ENCODE measurements at regions of chr12 and their contacts with region 1.

Region 1: DNA sequence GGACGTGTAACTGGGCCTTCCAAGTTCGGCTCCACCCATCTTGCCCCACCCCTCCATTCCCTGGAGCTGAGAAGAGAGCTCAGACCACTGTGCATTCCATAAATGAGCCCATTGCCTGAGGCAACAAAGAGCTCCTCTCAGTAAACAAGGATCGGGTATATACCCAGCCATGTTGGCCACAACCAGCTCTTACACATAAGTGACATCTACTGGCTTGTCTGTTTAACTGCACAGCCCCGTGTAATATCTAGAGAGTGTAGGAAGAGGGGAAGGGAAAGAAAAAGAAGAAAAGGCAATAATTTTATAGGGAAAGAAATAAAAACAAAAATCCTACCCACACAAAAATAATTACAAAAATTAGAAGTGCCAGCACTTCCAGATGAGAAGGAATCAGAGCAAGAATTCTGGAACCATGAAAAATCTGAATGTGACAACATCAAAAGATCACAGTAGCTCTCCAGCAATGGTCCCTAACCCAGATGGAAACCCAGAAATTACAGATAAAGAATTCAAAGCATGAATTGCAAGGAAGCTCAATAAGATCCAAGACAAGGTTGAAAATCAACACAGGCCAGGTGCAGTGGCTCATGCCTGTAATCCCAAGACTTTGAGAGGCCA is 308.1 kb downstream of the RPAP3 start:
- DNase-seq: peak; percentile 73
- ATAC-seq: peak; percentile 78
- H3K4me3 ChIP-seq: peak overlapping the region in 3 of 5 experiments; percentile 15 to 39 (median 30)
- H3K4me3 Mint-ChIP-seq: peak overlapping the region; percentile 63
- H3K27ac ChIP-seq: peak overlapping the region; percentile 49 to 75
- H3K27ac Mint-ChIP-seq: peak overlapping the region; percentile 91
- H3K4me1 ChIP-seq: peaks cover 27 to 48% of the 10 kb centered on the region in 2 donors
- H3K4me1 Mint-ChIP-seq: peaks cover 72% of the 10 kb centered on the region
- H3K27me3 ChIP-seq: no peaks in the 10 kb centered on the region
- H3K27me3 Mint-ChIP-seq: no peaks in the 10 kb centered on the region
- CTCF ChIP-seq: peak; percentile 70

Region 2: DNA sequence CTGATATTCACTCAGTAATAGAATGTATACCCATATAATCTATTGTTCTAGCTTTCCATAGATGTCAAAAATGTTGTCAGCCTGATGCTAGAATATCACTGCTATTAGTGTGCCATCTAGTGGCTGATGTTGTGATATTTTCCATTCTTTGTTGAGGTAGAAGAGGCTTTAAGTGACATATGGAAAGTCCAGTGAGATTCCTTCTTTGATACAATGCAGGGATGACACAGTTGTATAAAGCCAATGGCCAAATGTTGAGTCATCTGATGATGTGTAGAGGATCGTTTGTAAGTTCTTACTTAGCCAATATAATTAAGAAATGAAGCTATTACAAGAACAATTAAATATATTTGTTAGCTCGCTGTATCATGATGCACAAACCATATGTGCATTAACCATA is 376.5 kb before region 1 on chr12:
- CTCF ChIA-PET with region 1: interaction called, 11 read pairs
- POLR2A ChIA-PET with region 1: no interaction called
- intact Hi-C with region 1: no loop called
- DNase-seq: peak; percentile 70
- ATAC-seq: peak; percentile 28
- H3K4me3 ChIP-seq: no peak overlapping the region
- H3K4me3 Mint-ChIP-seq: no peak overlapping the region
- H3K27ac ChIP-seq: no peak overlapping the region
- H3K27ac Mint-ChIP-seq: no peak overlapping the region
- H3K4me1 ChIP-seq: no peaks in the 10 kb centered on the region
- H3K4me1 Mint-ChIP-seq: no peaks in the 10 kb centered on the region
- H3K27me3 ChIP-seq: peaks cover 0 to 3% (median under 1%) of the 10 kb centered on the region in 4 experiments
- H3K27me3 Mint-ChIP-seq: peaks cover 9% of the 10 kb centered on the region
- CTCF ChIP-seq: peak; percentile 88

Region 3: DNA sequence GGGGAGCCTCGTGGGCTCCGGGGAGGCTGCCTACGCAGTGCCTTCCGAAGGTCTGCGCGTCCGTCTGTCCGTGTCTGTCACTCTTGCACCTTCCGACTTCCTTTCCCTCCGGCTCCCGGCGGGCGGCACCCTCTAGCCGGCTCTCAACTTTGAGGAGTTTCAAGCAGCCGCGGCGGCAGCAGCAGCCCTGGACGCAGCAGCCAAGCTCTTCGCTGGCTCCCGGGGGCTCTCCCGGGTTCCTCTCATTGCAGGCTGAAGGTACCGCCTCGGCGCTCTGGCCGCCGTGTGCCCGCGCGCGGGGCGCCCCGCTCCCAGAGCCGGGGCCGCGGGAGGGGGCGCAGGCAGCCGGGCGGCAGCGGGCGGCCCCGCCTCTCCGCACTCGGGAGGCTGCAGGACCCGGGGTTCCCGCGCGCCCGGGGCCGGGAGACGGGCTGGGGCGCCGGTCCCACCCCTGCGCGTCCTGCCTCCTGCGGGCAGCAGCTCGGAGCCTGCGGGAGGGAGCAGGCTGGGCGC is 318.2 kb before region 1 on chr12 and contains the starts of genes AMIGO2 and PCED1B:
- CTCF ChIA-PET with region 1: interaction called, 43 read pairs
- POLR2A ChIA-PET with region 1: interaction called, 3 read pairs
- intact Hi-C with region 1: loop called (anchors 1 kb)
- DNase-seq: peak; percentile 68
- ATAC-seq: peak; percentile 50
- H3K4me3 ChIP-seq: peak within 1 kb of the TSS; percentile 74 to 92 (median 83)
- H3K4me3 Mint-ChIP-seq: peak within 1 kb of the TSS; percentile 98
- H3K27ac ChIP-seq: peak within 1 kb of the TSS; percentile 53 to 78
- H3K27ac Mint-ChIP-seq: peak within 1 kb of the TSS; percentile 91
- H3K4me1 ChIP-seq: peaks cover 17 to 29% of the 10 kb centered on the region in 2 donors
- H3K4me1 Mint-ChIP-seq: peaks cover 59% of the 10 kb centered on the region
- H3K27me3 ChIP-seq: no peaks in the 10 kb centered on the region
- H3K27me3 Mint-ChIP-seq: no peaks in the 10 kb centered on the region
- CTCF ChIP-seq: no peak
- total RNA-seq, gene AMIGO2: 9.2 and 10.4 TPM in 2 replicates
- total RNA-seq, gene PCED1B: 45.8 and 48.0 TPM in 2 replicates

Region 4: GRCh38 chr12:47207340-47207717 is 190.4 kb before region 1 on chr12:
- CTCF ChIA-PET with region 1: interaction called, 30 read pairs
- POLR2A ChIA-PET with region 1: interaction called, 3 read pairs
- intact Hi-C with region 1: no loop called
- DNase-seq: peak; percentile 87
- ATAC-seq: peak; percentile 85
- H3K4me3 ChIP-seq: peak overlapping the region in 2 of 5 experiments; percentile 7 to 31
- H3K4me3 Mint-ChIP-seq: peak overlapping the region; percentile 75
- H3K27ac ChIP-seq: peak overlapping the region; percentile 78 to 84
- H3K27ac Mint-ChIP-seq: peak overlapping the region; percentile 94
- H3K4me1 ChIP-seq: peaks cover 71 to 80% of the 10 kb centered on the region in 2 donors
- H3K4me1 Mint-ChIP-seq: peaks cover 77% of the 10 kb centered on the region
- H3K27me3 ChIP-seq: no peaks in the 10 kb centered on the region
- H3K27me3 Mint-ChIP-seq: no peaks in the 10 kb centered on the region
- CTCF ChIP-seq: no peak

Region 5: DNA sequence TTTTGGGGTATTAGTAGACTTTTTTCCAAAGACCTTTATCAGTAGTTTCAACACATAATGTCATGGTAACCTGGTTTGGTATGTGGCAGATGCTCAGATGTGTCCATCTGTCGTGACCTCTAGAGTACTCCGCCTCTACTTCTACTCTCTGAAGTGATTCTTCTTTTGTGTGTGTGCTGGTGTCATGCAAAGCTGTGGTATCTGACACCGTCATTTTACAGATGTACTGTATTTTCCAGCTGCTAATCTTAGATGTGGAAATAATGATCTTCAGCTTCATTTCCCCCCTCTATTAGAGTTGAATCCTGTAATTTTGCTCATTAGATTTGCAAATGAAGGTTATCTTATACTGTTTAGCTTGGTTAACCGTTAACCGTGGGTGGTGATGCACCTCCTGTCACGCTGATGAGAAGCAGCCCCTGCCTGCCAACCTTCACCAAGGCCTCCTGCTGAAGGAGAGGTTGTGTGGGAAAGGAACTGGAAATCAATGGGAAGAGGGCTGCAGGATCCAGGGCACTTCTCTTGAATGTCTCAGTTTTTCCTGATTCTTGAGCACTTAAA is 95.6 kb before region 1 on chr12:
- CTCF ChIA-PET with region 1: interaction called, 66 read pairs
- POLR2A ChIA-PET with region 1: interaction called, 3 read pairs
- intact Hi-C with region 1: loop called (anchors 1 kb)
- DNase-seq: no peak
- ATAC-seq: peak; percentile 56
- H3K4me3 ChIP-seq: no peak overlapping the region
- H3K4me3 Mint-ChIP-seq: peak overlapping the region; percentile 15
- H3K27ac ChIP-seq: no peak overlapping the region
- H3K27ac Mint-ChIP-seq: peak overlapping the region; percentile 66
- H3K4me1 ChIP-seq: peaks cover 4 to 21% of the 10 kb centered on the region in 2 donors
- H3K4me1 Mint-ChIP-seq: peaks cover 63% of the 10 kb centered on the region
- H3K27me3 ChIP-seq: no peaks in the 10 kb centered on the region
- H3K27me3 Mint-ChIP-seq: no peaks in the 10 kb centered on the region
- CTCF ChIP-seq: no peak

Region 6: DNA sequence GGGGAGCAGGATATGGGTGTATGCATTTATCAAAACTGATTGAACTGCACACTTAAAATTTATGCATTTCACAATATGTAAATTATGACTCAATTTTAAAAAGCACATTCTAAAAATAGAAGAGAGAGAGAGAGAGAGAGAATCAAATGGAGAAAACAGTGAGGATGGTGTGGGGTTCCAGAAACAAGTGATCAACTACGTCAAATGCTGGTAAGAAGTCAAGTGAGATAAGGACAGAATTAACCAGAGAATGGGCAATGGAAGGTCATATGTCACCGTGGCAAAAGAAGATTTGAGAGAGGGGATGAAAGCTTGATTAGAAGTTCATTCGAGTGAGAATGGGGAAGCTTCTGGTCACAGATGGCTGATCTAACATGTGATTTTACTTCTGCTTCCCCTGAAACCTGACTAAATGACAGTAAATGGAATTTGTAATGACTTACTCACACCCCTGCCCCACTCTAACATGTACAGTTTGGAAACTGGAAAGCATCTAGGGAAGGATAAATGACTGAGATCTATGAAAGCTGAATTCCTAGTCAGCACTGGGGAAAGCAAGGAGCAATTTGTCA is 41.6 kb before region 1 on chr12:
- CTCF ChIA-PET with region 1: interaction called, 12 read pairs
- POLR2A ChIA-PET with region 1: interaction called, 7 read pairs
- intact Hi-C with region 1: loop called (anchors 2 kb)
- DNase-seq: peak; percentile 93
- ATAC-seq: peak; percentile 77
- H3K4me3 ChIP-seq: peak overlapping the region in 1 of 5 experiments; percentile 31
- H3K4me3 Mint-ChIP-seq: peak overlapping the region; percentile 74
- H3K27ac ChIP-seq: peak overlapping the region; percentile 91 to 95
- H3K27ac Mint-ChIP-seq: peak overlapping the region; percentile 98
- H3K4me1 ChIP-seq: peaks cover 71 to 80% of the 10 kb centered on the region in 2 donors
- H3K4me1 Mint-ChIP-seq: peaks cover 78% of the 10 kb centered on the region
- H3K27me3 ChIP-seq: no peaks in the 10 kb centered on the region
- H3K27me3 Mint-ChIP-seq: no peaks in the 10 kb centered on the region
- CTCF ChIP-seq: no peak

Region 7: DNA sequence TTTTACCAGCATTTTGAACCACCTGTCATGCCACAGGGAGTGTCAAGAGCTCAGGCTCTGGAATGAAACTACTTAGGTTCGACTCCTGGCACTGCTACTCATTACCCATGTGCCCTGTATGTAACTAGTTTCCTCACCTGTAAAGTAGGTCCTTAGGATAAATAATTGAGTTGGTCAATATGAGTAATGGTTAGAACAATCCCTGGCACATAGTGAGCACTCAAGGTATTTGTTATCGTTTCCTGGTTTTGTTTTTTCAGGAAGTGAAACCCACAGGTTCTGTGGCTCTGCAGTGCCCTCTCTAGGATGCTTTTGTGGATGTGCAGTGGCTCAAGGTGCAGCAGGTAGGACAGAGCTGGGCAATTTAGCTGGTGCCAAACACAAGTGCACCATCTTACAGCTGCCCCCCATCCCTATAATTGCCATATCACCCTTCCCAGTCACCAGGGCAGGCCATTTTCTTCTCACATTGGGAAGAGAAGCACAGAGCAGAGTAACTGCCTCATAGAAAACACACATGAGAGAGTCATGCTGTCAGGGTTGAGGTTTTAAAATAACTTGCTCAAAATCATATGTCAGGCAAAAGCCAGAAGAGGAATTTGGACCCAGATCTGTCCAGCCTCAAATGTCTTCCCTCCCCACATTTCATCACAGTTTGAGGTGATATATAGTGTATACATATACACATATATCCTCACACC is 10.5 kb after region 1 on chr12:
- CTCF ChIA-PET with region 1: interaction called, 26 read pairs
- POLR2A ChIA-PET with region 1: no interaction called
- intact Hi-C with region 1: loop called (anchors 1 kb)
- DNase-seq: peak; percentile 87
- ATAC-seq: peak; percentile 98
- H3K4me3 ChIP-seq: no peak overlapping the region
- H3K4me3 Mint-ChIP-seq: no peak overlapping the region
- H3K27ac ChIP-seq: peak overlapping the region; percentile 41 to 55
- H3K27ac Mint-ChIP-seq: peak overlapping the region; percentile 73
- H3K4me1 ChIP-seq: peaks cover 18 to 19% of the 10 kb centered on the region in 2 donors
- H3K4me1 Mint-ChIP-seq: peaks cover 21% of the 10 kb centered on the region
- H3K27me3 ChIP-seq: no peaks in the 10 kb centered on the region
- H3K27me3 Mint-ChIP-seq: no peaks in the 10 kb centered on the region
- CTCF ChIP-seq: peak; percentile 83

Region 8: DNA sequence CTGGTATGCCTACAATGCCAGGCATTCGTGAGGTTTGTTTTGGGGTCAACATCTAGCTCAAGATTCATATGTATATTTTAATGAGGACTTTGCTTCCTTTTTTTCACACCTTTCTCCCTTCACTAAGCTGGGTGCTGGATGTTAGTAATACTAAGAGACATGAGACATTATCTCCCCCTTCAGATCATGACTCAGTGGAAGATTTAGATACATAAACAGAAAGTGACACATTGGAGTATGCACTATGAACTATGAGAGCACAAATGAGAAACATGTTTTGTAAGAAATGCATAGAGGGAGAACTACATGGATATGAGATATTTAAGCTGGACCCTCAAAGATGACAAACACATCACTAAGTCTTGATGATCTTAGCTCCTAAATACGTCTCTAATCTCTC is 21.7 kb after region 1 on chr12:
- CTCF ChIA-PET with region 1: no interaction called
- POLR2A ChIA-PET with region 1: no interaction called
- intact Hi-C with region 1: no loop called
- DNase-seq: no peak
- ATAC-seq: no peak
- H3K4me3 ChIP-seq: no peak overlapping the region
- H3K4me3 Mint-ChIP-seq: no peak overlapping the region
- H3K27ac ChIP-seq: no peak overlapping the region
- H3K27ac Mint-ChIP-seq: no peak overlapping the region
- H3K4me1 ChIP-seq: no peaks in the 10 kb centered on the region
- H3K4me1 Mint-ChIP-seq: peaks cover 5% of the 10 kb centered on the region
- H3K27me3 ChIP-seq: peaks cover 0 to 3% (median 0%) of the 10 kb centered on the region in 4 experiments
- H3K27me3 Mint-ChIP-seq: peaks cover 6% of the 10 kb centered on the region
- CTCF ChIP-seq: no peak